Naive thymus-derived CD8-positive, alpha-beta T cell (primary cell): ENCODE measurements at regions of chr22 and their contacts with region 1.

Region 1: GRCh38 chr22:36287881-36288516 is 35.1 kb downstream of the APOL1 start:
- DNase-seq: no peak
- ATAC-seq: no peak
- H3K4me3 Mint-ChIP-seq: peak overlapping the region in 8 of 10 donors; percentile 18 to 82 (median 46)
- H3K27ac Mint-ChIP-seq: peak overlapping the region; percentile 51 to 96 (median 88)
- H3K4me1 Mint-ChIP-seq: peaks cover 30 to 58% (median 51%) of the 10 kb centered on the region in 4 donors
- H3K27me3 Mint-ChIP-seq: no peaks in the 10 kb centered on the region

Region 2: DNA sequence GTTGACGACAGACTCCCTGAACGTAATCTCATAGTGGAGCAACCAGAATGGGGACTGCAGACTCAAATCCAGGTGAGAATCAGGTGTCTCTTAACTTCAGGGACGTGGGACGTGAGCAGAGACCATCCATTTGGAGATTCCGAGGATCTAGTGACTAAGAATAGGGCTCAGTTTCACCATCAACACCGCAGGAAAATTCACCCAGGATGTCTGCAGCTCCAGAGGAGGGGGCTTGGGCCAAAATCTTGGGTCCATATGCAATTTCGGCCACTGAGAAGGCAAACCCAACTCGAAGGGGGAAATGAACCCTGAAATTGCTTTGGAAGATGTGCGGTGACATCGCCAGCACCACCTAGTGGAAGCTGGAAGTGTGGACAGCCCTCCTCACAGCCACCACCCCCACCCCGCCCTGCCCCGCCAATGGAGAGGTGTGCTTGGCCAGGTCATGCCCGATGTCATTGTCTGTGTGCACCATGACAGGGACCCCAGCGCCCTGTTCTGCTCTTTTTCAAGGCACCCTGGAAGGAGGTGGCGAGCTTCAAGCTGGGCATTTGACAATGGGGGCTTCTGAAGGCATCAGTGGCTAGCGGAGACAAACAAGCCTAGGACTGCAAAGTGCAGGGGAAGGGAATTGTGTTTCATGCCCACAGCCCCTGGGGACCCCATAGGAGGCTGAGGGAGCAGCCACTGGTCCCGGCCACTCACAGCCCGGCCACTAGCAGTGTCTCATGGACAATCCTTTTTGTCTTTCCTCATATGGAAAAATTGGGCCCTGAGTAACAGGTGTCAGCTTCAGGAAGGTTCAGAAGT is 10.3 kb before region 1 on chr22:
- POLR2A ChIA-PET with region 1: interaction called, 12 read pairs
- DNase-seq: peak; percentile 44 to 75 (median 59)
- ATAC-seq: peak; percentile 74 to 80
- H3K4me3 Mint-ChIP-seq: peak overlapping the region in 7 of 10 donors; percentile 0 to 67 (median 27)
- H3K27ac Mint-ChIP-seq: peak overlapping the region; percentile 32 to 87 (median 72)
- H3K4me1 Mint-ChIP-seq: peaks cover 8 to 36% (median 28%) of the 10 kb centered on the region in 4 donors
- H3K27me3 Mint-ChIP-seq: no peaks in the 10 kb centered on the region

Region 3: DNA sequence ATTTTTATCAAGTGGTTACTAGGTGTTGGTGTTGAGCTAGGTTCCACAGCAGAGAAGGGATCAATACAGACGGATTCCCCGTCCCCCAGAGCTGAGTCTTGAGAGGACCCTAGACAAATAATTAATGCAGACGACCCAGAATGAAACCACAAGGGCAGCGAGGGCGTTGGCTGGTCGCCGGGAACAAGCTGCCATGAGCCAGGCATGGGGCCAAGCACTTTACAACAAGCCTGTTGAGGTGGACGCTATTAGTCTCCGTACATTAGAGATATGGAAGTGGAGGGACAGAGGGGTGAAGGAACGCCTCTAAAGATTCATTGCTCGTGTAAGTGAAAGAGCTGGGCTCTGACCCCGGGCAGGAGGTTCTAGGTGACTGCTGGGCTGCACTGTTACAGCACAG is 318.1 kb after region 1 on chr22:
- POLR2A ChIA-PET with region 1: no interaction called
- DNase-seq: no peak
- ATAC-seq: no peak
- H3K4me3 Mint-ChIP-seq: no peak overlapping the region
- H3K27ac Mint-ChIP-seq: no peak overlapping the region
- H3K4me1 Mint-ChIP-seq: peaks cover 0 to 2% (median 0%) of the 10 kb centered on the region in 4 donors
- H3K27me3 Mint-ChIP-seq: peaks cover 22 to 57% (median 40%) of the 10 kb centered on the region in 5 donors